Activated CD4-positive, alpha-beta T cell treated with anti-CD3 and anti-CD28 coated beads, Interleukin-2, amount 10 ng/mL, durations not matched to agents 24 days and 14 days (primary cell): ENCODE measurements at regions of chr1 and their contacts with region 1.

Region 1: GRCh38 chr1:64864018-64864940 is 102.1 kb downstream of the JAK1 start:
- DNase-seq: peak; percentile 77
- H3K4me3 Mint-ChIP-seq: no peak overlapping the region
- H3K27ac Mint-ChIP-seq: peak overlapping the region; percentile 75
- H3K4me1 Mint-ChIP-seq: peaks cover 24% of the 10 kb centered on the region
- H3K27me3 Mint-ChIP-seq: no peaks in the 10 kb centered on the region

Region 2: GRCh38 chr1:65044378-65044777 is 180.1 kb after region 1 on chr1:
- intact Hi-C with region 1: loop called (anchors 5 kb)
- DNase-seq: no peak
- H3K4me3 Mint-ChIP-seq: no peak overlapping the region
- H3K27ac Mint-ChIP-seq: no peak overlapping the region
- H3K4me1 Mint-ChIP-seq: peaks cover 11% of the 10 kb centered on the region
- H3K27me3 Mint-ChIP-seq: no peaks in the 10 kb centered on the region